CD4-positive, alpha-beta memory T cell (primary cell): ENCODE measurements at regions of chr2 and their contacts with region 1.

Region 1: GRCh38 chr2:19857806-19858205 is 44.0 kb downstream of the TTC32 start:
- DNase-seq: no peak
- H3K4me3 ChIP-seq: no peak overlapping the region
- H3K4me3 Mint-ChIP-seq: no peak overlapping the region
- H3K27ac ChIP-seq: no peak overlapping the region
- H3K27ac Mint-ChIP-seq: no peak overlapping the region
- H3K4me1 ChIP-seq: no peaks in the 10 kb centered on the region
- H3K4me1 Mint-ChIP-seq: peaks cover 0 to under 1% (median 0%) of the 10 kb centered on the region in 4 donors
- H3K27me3 ChIP-seq: no peaks in the 10 kb centered on the region
- H3K27me3 Mint-ChIP-seq: peaks cover 3 to 8% of the 10 kb centered on the region in 2 donors

Region 2: DNA sequence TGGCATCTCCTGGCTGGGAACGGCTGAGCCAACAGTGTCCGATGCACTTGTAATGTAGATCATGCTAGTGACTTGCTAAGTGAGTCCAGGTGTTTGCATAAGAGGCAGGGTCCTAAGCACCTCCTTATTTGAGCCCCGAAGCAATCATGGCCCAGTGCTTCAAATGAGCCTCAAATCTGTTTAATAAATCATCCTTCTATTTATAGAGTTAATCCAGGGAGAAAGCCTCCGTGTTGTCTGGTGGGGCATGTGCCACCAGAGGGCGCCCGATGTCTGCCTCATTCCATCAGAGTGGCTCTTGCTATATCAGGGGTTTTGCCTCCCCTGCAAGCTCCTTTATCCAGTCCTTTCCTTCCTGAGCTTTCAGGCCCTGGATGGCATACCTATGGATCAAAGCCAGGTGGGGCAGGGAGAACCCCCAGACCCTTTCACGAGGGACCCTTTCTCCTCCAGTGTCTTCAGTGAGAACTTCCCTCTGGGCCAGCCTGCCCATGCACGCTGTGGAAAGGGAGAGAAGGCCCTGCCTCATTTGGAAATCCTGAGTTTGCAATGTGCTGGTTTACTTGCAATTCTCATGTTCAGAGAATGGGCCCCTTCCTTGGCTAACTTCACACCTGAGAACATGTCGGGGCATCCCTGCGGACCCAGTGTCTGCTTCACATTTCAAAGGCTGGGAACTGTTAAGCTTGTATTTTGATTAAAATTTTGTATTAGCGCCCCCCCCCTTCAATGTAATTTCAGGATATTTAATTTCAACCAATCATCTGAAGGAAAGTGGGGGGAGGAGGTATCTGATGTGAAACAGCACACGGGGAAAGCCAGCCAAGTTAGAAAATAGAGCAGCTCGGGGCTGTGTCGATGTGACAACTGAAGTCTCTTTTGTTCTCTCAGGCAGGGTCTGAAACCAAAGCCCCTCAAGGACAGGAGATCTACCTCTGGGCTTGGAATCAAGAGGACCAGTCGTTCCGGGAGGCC is 1337.1 kb before region 1 on chr2:
- CTCF ChIA-PET with region 1: interaction called, 151 read pairs
- POLR2A ChIA-PET with region 1: no interaction called
- intact Hi-C with region 1: no loop called
- DNase-seq: peak; percentile 56 to 67 (median 62)
- H3K4me3 ChIP-seq: no peak overlapping the region
- H3K4me3 Mint-ChIP-seq: no peak overlapping the region
- H3K27ac ChIP-seq: no peak overlapping the region
- H3K27ac Mint-ChIP-seq: no peak overlapping the region
- H3K4me1 ChIP-seq: no peaks in the 10 kb centered on the region
- H3K4me1 Mint-ChIP-seq: no peaks in the 10 kb centered on the region
- H3K27me3 ChIP-seq: peaks cover 4% of the 10 kb centered on the region
- H3K27me3 Mint-ChIP-seq: peaks cover 14% of the 10 kb centered on the region in 2 donors

Region 3: DNA sequence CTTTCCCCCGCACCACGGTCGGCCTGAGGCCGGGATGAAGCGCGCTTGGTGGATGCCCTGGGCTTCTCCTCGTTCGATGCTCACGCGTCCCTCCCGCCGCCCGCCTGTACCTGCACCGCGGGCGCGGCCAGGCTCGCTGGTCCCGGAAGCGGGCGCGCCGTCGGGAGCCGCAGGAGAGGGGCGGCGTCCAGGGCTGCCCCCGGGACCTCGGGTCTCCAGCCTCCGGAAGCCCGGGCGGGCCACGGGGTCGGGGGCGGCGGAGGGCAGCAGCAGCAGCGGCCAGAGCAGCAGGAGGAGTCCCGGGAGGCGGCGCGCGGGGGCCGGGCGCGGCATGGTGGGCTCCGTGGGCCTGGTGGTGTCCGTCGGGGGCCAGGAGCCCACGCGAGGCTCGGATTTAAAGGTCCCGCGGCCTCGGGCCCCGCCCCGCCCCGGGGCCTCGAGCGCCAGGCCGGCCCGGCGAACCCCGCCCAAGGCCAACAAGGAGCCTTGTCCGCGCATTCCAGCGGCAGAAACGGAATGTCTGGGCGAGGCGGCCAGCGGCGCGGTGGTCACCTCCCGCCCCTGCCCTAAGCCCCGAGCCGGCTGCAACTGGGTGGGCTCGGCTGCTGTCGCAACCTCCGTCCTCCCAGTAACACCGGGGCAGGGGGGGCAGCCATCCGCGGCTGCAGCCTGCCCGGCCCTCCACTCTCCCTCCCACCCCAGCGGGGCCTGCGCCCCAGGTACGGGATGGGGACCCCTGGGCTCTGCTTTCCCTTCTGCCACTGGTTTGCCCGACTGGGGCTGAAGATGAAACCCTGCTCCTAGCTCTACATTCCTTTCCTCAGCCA is 154.7 kb after region 1 on chr2 and contains the start of gene MATN3:
- CTCF ChIA-PET with region 1: no interaction called
- POLR2A ChIA-PET with region 1: no interaction called
- intact Hi-C with region 1: no loop called
- DNase-seq: peak in 2 of 5 donors; percentile 5 to 10
- H3K4me3 ChIP-seq: peak within 1 kb of the TSS in 1 of 2 donors; percentile 9
- H3K4me3 Mint-ChIP-seq: peak within 1 kb of the TSS; percentile 66 to 85 (median 77)
- H3K27ac ChIP-seq: no peak within 1 kb of the TSS
- H3K27ac Mint-ChIP-seq: peak within 1 kb of the TSS in 2 of 7 donors; percentile 66 to 77
- H3K4me1 ChIP-seq: peaks cover 12% of the 10 kb centered on the region
- H3K4me1 Mint-ChIP-seq: peaks cover 5 to 14% (median 10%) of the 10 kb centered on the region in 4 donors
- H3K27me3 ChIP-seq: peaks cover 19% of the 10 kb centered on the region
- H3K27me3 Mint-ChIP-seq: peaks cover 30% of the 10 kb centered on the region in 2 donors
- total RNA-seq, gene MATN3: not detected